ENCODE measurements at regions of chr18 and their contacts with region 1.

Region 1: DNA sequence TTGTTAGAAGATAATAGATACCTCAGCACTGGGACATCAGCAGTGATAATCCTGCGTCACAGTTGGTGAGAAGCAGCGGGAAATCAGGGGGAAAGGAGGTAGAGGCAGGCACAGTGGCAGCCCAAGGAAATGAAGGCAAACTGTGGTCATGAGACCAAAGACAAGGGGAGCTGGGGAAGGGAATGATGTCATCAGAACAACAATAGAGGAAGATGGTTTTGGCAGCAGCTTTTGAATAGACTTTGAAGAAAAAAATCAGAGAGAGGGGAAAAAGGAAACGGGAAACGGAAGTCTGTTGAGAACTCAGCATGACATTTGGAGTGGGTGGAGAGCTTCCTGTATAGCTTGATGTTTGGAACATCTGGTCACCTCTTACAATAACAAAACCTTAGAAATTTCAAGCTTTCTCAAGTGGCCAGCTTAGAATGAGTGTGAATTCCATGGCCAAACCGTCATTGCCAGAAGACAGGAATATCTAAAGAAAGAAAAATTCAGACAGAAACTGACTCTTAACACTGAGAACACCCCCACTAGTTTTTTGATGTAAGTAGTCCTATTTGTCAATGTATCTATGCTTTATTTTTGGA is 18.4 kb upstream of the YES1 start:
- DNase-seq: no peak
- H3K4me3 ChIP-seq: no peak overlapping the region
- H3K4me3 Mint-ChIP-seq: no peak overlapping the region
- H3K27ac Mint-ChIP-seq: no peak overlapping the region
- H3K4me1 ChIP-seq: peaks cover 10% of the 10 kb centered on the region; the same call in 1 of the 2 replicates
- H3K4me1 Mint-ChIP-seq: peaks cover 9% of the 10 kb centered on the region
- H3K27me3 ChIP-seq: no peaks in the 10 kb centered on the region
- H3K27me3 Mint-ChIP-seq: no peaks in the 10 kb centered on the region
- CTCF ChIP-seq: no peak

Region 2: GRCh38 chr18:741931-742512 is 88.4 kb before region 1 on chr18:
- CTCF ChIA-PET with region 1: interaction called, 10 read pairs
- POLR2A ChIA-PET with region 1: no interaction called
- intact Hi-C with region 1: loop called (anchors 1 kb)
- DNase-seq: peak in 1 of 2 experiments; percentile 20
- H3K4me3 ChIP-seq: no peak overlapping the region
- H3K4me3 Mint-ChIP-seq: no peak overlapping the region
- H3K27ac Mint-ChIP-seq: no peak overlapping the region
- H3K4me1 ChIP-seq: no peaks in the 10 kb centered on the region
- H3K4me1 Mint-ChIP-seq: no peaks in the 10 kb centered on the region
- H3K27me3 ChIP-seq: no peaks in the 10 kb centered on the region
- H3K27me3 Mint-ChIP-seq: no peaks in the 10 kb centered on the region
- CTCF ChIP-seq: peak; percentile 69 to 80